ENCODE measurements at regions of chr10 and their contacts with region 1.

Region 1: DNA sequence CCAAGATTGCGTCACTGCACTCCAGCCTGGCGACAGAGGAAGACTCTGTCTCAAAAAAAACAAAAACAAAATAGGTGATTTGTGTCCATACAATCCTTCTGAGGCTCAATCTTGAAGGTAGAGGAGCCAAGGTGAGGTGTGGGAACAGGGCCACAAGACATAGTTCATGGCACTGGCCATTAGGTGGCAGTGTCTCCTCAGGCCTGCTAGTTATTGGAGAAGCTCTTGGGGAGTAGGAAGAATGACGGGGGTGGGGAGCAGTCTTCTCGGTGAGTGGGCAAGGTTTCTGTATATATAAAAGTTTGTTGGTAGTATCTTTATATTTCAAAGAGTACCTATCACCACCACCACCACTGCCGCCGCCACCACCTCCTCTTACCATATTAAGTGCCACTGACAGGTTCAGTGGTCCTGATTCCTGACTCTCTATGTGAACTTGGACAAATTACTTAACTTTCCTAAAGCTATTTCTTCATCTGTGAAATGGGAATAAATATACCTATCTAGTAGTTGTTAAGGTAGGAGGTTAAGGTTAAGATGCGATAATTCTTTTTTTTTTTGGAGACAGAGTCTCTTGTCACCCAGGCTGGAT is 24.0 kb downstream of the CCSER2 start:
- DNase-seq: peak; percentile 85
- ATAC-seq: peak; percentile 88
- H3K4me3 Mint-ChIP-seq: no peak overlapping the region
- H3K27ac Mint-ChIP-seq: no peak overlapping the region
- H3K4me1 Mint-ChIP-seq: peaks cover 74% of the 10 kb centered on the region
- H3K27me3 Mint-ChIP-seq: no peaks in the 10 kb centered on the region

Region 2: DNA sequence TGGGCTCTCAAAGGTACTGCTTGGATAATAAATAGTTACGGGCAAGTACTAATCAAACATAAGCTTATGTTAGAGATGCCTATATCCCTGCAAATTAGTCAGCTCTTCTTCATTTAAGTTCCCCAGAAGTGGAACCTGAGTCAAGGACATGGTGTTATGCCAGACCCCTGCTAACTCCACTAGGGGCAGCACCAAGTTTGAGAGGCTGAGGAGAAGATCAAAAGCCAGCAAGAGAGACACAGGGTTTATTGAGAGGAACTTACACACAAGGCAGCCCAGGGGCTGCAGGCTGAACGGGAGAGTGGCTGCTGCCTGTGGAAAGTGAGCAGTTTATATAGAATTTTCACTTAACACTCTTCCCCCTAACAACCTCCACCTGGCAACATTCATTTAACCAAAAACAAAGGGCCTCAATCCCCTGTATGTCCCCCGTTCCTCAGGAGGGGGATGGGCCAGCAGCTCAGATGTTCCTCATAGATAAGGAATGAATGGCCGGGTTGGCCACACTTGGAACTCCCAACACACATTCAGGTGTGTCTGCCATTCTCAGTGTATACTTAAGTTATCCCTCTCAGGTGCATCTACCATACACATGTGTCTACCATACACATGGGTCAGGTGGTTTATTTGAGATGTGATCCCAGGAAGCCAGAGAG is 275.7 kb before region 1 on chr10:
- CTCF ChIA-PET with region 1: no interaction called
- POLR2A ChIA-PET with region 1: no interaction called
- intact Hi-C with region 1: no loop called
- DNase-seq: peak; percentile 13
- ATAC-seq: peak; percentile 63
- H3K4me3 Mint-ChIP-seq: no peak overlapping the region
- H3K27ac Mint-ChIP-seq: no peak overlapping the region
- H3K4me1 Mint-ChIP-seq: no peaks in the 10 kb centered on the region
- H3K27me3 Mint-ChIP-seq: peaks cover 10% of the 10 kb centered on the region

Region 3: DNA sequence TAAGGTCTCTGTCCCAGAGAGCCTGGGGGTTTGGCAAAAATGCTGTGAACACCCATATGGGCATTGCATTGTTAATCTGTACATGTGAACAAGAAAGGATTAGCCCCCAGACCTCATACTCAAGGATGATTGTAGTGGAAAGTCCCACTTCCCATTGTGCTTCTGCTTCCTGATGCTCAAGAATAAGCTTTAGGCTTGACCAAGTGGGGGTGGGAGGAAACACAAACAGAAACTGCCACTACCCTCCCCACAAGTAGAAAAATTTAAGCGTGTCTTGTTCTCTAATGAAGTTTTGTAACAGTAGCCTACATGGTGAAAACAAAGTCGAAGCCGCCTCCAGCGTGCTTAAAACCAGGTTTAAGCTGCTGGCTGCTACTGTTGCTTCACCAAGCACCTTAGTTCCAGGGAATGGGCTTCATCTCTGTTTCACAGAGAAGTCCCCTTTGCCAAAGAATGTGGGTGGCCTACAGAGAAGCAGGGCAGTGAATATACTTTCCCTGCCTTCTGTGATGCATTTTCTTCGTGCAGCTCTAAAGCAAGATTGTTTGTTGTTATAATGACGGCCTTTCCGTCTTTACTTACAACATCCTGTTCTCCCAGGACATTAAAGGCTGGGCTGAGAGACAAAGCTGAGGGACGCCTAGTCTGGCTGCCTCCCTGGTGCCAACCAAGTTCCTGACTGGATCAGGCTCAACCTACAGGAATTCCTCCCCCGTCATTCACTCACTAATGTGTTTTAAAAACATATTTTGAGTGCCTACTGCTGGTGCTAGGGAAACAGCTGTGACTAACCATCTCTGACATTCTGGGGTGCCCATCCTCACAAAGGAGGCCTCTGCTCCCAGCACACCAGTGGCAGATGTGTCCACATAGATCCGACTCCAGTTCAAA is 56.0 kb before region 1 on chr10:
- CTCF ChIA-PET with region 1: no interaction called
- POLR2A ChIA-PET with region 1: no interaction called
- intact Hi-C with region 1: no loop called
- DNase-seq: no peak
- ATAC-seq: no peak
- H3K4me3 Mint-ChIP-seq: no peak overlapping the region
- H3K27ac Mint-ChIP-seq: no peak overlapping the region
- H3K4me1 Mint-ChIP-seq: peaks cover 21% of the 10 kb centered on the region
- H3K27me3 Mint-ChIP-seq: peaks cover 5% of the 10 kb centered on the region

Region 4: DNA sequence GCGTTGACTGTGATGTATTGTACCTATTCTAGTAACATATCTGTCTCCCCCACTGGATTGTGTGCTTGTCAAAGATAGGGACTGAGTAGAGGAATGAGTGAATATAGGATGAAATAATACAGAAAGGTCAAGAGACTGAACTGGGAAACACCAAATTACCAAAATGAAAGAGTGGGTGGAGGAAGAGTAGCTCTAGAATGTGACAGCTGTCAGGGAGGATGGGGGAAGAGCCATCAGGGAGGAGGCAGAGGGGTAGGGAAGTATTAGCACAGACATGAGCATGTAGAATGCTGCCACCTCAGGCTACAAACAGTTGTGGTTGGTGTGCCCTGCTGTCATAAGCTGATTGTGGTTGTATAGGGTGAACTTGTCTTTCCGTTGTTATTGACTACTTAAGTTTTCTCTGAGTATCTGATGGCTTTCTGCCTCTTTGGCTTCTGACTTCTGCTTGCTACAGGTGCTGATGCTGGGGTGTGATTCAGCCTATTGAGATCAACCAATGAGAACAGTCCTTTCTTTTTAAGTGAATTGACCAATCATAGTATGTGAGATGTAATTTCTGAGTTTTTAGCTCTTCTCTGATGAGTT is 18.4 kb before region 1 on chr10:
- CTCF ChIA-PET with region 1: interaction called, 27 read pairs
- POLR2A ChIA-PET with region 1: interaction called, 3 read pairs
- intact Hi-C with region 1: no loop called
- DNase-seq: peak; percentile 76
- ATAC-seq: peak; percentile 83
- H3K4me3 Mint-ChIP-seq: peak overlapping the region; percentile 52
- H3K27ac Mint-ChIP-seq: peak overlapping the region; percentile 93
- H3K4me1 Mint-ChIP-seq: peaks cover 38% of the 10 kb centered on the region
- H3K27me3 Mint-ChIP-seq: no peaks in the 10 kb centered on the region

Region 5: GRCh38 chr10:84341538-84341856 is 10.8 kb before region 1 on chr10:
- CTCF ChIA-PET with region 1: interaction called, 34 read pairs
- POLR2A ChIA-PET with region 1: no interaction called
- intact Hi-C with region 1: no loop called
- DNase-seq: peak; percentile 57
- ATAC-seq: peak; percentile 40
- H3K4me3 Mint-ChIP-seq: peak overlapping the region; percentile 14
- H3K27ac Mint-ChIP-seq: peak overlapping the region; percentile 55
- H3K4me1 Mint-ChIP-seq: peaks cover 49% of the 10 kb centered on the region
- H3K27me3 Mint-ChIP-seq: no peaks in the 10 kb centered on the region

Region 6: GRCh38 chr10:84375011-84375410 is 22.7 kb after region 1 on chr10:
- CTCF ChIA-PET with region 1: interaction called, 6 read pairs
- POLR2A ChIA-PET with region 1: no interaction called
- intact Hi-C with region 1: loop called (anchors 2 kb)
- DNase-seq: peak; percentile 53
- ATAC-seq: peak; percentile 72
- H3K4me3 Mint-ChIP-seq: no peak overlapping the region
- H3K27ac Mint-ChIP-seq: no peak overlapping the region
- H3K4me1 Mint-ChIP-seq: peaks cover 41% of the 10 kb centered on the region
- H3K27me3 Mint-ChIP-seq: no peaks in the 10 kb centered on the region

Region 7: GRCh38 chr10:84966708-84967459 is 614.5 kb after region 1 on chr10:
- CTCF ChIA-PET with region 1: no interaction called
- POLR2A ChIA-PET with region 1: no interaction called
- intact Hi-C with region 1: no loop called
- DNase-seq: no peak
- ATAC-seq: no peak
- H3K4me3 Mint-ChIP-seq: no peak overlapping the region
- H3K27ac Mint-ChIP-seq: no peak overlapping the region
- H3K4me1 Mint-ChIP-seq: no peaks in the 10 kb centered on the region
- H3K27me3 Mint-ChIP-seq: no peaks in the 10 kb centered on the region